ENCODE measurements at regions of chr7 and their contacts with region 1.

Region 1: GRCh38 chr7:92584996-92585395 is 5.2 kb downstream of the FAM133B start:
- DNase-seq: no peak
- H3K4me3 ChIP-seq: no peak overlapping the region
- H3K27ac ChIP-seq: no peak overlapping the region
- H3K4me1 ChIP-seq: peaks cover 0 to 9% of the 10 kb centered on the region in 2 donors
- H3K27me3 ChIP-seq: no peaks in the 10 kb centered on the region
- CTCF ChIP-seq: no peak
- POLR2A ChIP-seq: no peak

Region 2: GRCh38 chr7:92652536-92652935 is 67.5 kb after region 1 on chr7:
- intact Hi-C with region 1: loop called (anchors 10 kb)
- DNase-seq: no peak
- H3K4me3 ChIP-seq: no peak overlapping the region
- H3K27ac ChIP-seq: no peak overlapping the region
- H3K4me1 ChIP-seq: no peaks in the 10 kb centered on the region
- H3K27me3 ChIP-seq: no peaks in the 10 kb centered on the region
- CTCF ChIP-seq: no peak
- POLR2A ChIP-seq: no peak